ENCODE measurements at regions of chr21 and their contacts with region 1.

Region 1: GRCh38 chr21:37478794-37479193 is 112.2 kb downstream of the DYRK1A start:
- DNase-seq: peak in 1 of 2 experiments; percentile 26
- H3K4me3 ChIP-seq: no peak overlapping the region
- H3K4me3 Mint-ChIP-seq: no peak overlapping the region
- H3K27ac Mint-ChIP-seq: no peak overlapping the region
- H3K4me1 ChIP-seq: peaks cover 11% of the 10 kb centered on the region; the same call in 1 of the 2 replicates
- H3K4me1 Mint-ChIP-seq: no peaks in the 10 kb centered on the region
- H3K27me3 ChIP-seq: no peaks in the 10 kb centered on the region
- H3K27me3 Mint-ChIP-seq: no peaks in the 10 kb centered on the region
- CTCF ChIP-seq: no peak

Region 2: GRCh38 chr21:37463083-37463801 is 15.6 kb before region 1 on chr21:
- CTCF ChIA-PET with region 1: interaction called, 3 read pairs
- POLR2A ChIA-PET with region 1: no interaction called
- intact Hi-C with region 1: loop called (anchors 1 kb)
- DNase-seq: peak in 1 of 2 experiments; percentile 36
- H3K4me3 ChIP-seq: no peak overlapping the region
- H3K4me3 Mint-ChIP-seq: no peak overlapping the region
- H3K27ac Mint-ChIP-seq: no peak overlapping the region
- H3K4me1 ChIP-seq: peaks cover 19% of the 10 kb centered on the region
- H3K4me1 Mint-ChIP-seq: peaks cover 18% of the 10 kb centered on the region
- H3K27me3 ChIP-seq: no peaks in the 10 kb centered on the region
- H3K27me3 Mint-ChIP-seq: no peaks in the 10 kb centered on the region
- CTCF ChIP-seq: peak; percentile 50 to 51

Region 3: GRCh38 chr21:37710546-37711285 is 231.9 kb after region 1 on chr21:
- CTCF ChIA-PET with region 1: no interaction called
- POLR2A ChIA-PET with region 1: no interaction called
- intact Hi-C with region 1: no loop called
- DNase-seq: no peak
- H3K4me3 ChIP-seq: no peak overlapping the region
- H3K4me3 Mint-ChIP-seq: no peak overlapping the region
- H3K27ac Mint-ChIP-seq: no peak overlapping the region
- H3K4me1 ChIP-seq: peaks cover 9% of the 10 kb centered on the region; the same call in 1 of the 2 replicates
- H3K4me1 Mint-ChIP-seq: peaks cover 13% of the 10 kb centered on the region
- H3K27me3 ChIP-seq: no peaks in the 10 kb centered on the region
- H3K27me3 Mint-ChIP-seq: no peaks in the 10 kb centered on the region
- CTCF ChIP-seq: no peak